Breast epithelium (tissue), 4 donors: ENCODE measurements at regions of chr7 and their contacts with region 1.

Region 1: DNA sequence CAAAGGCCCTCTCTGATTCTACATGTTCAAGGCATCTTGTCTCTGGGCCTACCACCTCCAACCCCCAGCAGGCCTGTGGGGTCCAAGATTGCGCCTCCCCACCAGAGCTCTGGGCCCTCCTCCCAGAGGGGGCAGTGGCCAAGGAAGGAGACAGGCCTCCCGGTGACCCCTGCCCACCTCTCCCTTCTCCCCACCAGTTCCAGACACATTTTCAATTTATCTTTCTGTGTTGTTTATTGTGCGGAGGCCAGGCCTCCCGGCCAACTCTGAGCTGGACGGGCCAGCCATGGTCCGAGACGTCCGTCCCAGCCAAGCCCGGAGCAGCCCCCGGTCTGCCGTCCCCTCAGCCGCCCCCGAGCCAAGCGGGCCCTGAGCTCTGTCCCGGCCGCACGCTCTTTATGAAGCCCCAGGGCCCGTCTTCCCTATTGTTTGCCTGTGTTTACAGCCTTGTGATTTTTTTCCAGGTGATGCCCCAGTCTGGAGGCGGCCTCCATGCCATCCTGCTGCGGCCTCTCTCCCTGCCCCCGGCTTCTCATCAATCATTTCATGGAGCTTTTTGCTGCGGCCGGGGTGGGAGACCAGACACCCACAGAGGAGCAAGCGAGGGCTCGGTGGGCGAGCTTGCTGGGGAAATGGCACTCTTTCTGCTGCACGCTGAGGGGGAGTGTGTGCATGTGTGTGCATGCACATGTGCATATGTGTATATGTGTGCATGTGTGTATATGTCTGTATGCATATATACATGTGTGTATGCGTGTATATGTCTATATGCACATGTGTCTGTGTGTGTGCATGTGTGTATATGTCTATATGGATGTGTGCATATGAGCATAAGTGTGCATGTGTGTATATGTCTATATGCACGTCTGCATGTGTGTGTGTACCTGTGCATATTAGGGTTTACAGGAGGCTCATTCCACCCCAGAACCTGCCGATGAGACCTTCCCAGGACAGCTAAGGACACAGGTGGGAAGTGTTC is 52.7 kb upstream of the ELN start:
- DNase-seq: peak in 1 of 2 donors; percentile 39
- H3K4me3 ChIP-seq: no peak overlapping the region
- H3K27ac ChIP-seq: no peak overlapping the region
- H3K4me1 ChIP-seq: no peaks in the 10 kb centered on the region
- H3K27me3 ChIP-seq: no peaks in the 10 kb centered on the region
- CTCF ChIP-seq: no peak
- POLR2A ChIP-seq: no peak

Region 2: GRCh38 chr7:73964786-73965185 is 10.5 kb before region 1 on chr7:
- intact Hi-C with region 1: loop called (anchors 1 kb)
- DNase-seq: peak in 1 of 2 donors; percentile 45
- H3K4me3 ChIP-seq: no peak overlapping the region
- H3K27ac ChIP-seq: no peak overlapping the region
- H3K4me1 ChIP-seq: no peaks in the 10 kb centered on the region
- H3K27me3 ChIP-seq: no peaks in the 10 kb centered on the region
- CTCF ChIP-seq: no peak
- POLR2A ChIP-seq: no peak